CD8-positive, alpha-beta memory T cell (primary cell): ENCODE measurements at regions of chr1 and their contacts with region 1.

Region 1: DNA sequence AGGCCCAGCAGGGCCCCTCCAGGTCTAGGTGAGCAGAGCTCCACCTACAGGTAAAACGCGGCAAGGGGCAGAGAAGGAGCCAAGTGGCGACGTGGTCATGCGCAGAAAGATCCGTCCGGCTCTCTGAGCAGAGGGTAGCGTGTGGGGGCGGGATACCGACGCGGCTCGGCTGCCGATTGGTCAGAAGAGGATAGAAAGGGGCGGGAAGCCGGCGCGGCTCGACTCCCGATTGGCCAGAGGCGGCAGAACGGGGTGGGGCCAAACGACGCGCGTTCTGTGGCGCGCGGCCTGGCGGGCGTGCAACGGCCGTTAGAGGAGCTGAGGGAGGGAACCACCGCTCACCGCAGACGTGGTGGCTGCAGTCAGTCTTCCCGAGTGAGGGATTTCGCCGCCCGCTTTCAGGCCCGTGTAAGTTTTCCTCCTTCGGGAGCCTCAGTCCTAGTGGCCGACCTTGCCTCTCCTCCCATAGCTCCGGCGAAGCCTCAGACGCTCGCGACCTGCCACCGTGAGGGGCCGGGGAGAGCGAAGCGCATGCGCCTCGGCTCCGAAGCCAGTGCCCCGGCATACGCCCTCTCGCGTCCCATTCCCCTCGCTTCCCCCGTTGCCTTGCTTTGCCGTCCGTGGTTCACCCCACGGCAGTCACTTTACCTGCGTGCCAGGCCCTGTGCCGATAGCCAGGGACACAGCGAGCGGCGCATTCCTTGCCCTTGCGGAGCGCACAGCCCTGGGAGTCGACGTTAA is at the start of gene CEP85:
- DNase-seq: peak; percentile 97 to 99 (median 98)
- H3K4me3 ChIP-seq: peak within 1 kb of the TSS; percentile 96
- H3K4me3 Mint-ChIP-seq: peak within 1 kb of the TSS; percentile 95 to 99 (median 97)
- H3K27ac ChIP-seq: peak within 1 kb of the TSS; percentile 89
- H3K27ac Mint-ChIP-seq: peak within 1 kb of the TSS; percentile 91 to 98 (median 96)
- H3K4me1 ChIP-seq: peaks cover 29% of the 10 kb centered on the region
- H3K4me1 Mint-ChIP-seq: peaks cover 29 to 38% (median 35%) of the 10 kb centered on the region in 3 donors
- H3K27me3 ChIP-seq: no peaks in the 10 kb centered on the region
- H3K27me3 Mint-ChIP-seq: peaks cover 0 to 5% of the 10 kb centered on the region in 2 donors
- total RNA-seq, gene CEP85: 28.8 to 29.7 TPM

Region 2: DNA sequence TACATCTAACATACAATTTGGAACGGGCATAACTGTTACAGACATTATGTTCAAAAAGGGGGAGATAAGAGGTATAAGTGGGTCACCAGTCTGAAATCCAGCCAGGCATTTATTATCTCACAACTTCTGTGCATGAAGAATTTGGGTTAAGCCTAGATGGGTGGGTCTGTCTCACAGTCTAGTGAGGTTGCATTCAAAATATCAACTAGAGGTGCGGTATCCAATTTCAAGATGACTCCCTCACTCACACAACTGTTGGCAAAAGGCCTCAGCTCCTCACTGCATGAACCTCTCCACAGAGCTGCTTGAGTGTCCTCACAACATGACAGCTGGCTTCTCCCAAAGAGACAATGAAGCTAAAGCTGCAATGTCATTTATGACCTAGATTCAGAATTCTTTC is 379.5 kb before region 1 on chr1:
- CTCF ChIA-PET with region 1: no interaction called
- POLR2A ChIA-PET with region 1: interaction called, 15 read pairs
- DNase-seq: no peak
- H3K4me3 ChIP-seq: no peak overlapping the region
- H3K4me3 Mint-ChIP-seq: no peak overlapping the region
- H3K27ac ChIP-seq: no peak overlapping the region
- H3K27ac Mint-ChIP-seq: no peak overlapping the region
- H3K4me1 ChIP-seq: peaks cover 9% of the 10 kb centered on the region
- H3K4me1 Mint-ChIP-seq: peaks cover 8 to 14% (median 12%) of the 10 kb centered on the region in 3 donors
- H3K27me3 ChIP-seq: no peaks in the 10 kb centered on the region
- H3K27me3 Mint-ChIP-seq: no peaks in the 10 kb centered on the region

Region 3: GRCh38 chr1:26169669-26170471 is 64.2 kb before region 1 on chr1 and contains the start of gene ZNF593:
- CTCF ChIA-PET with region 1: interaction called, 87 read pairs
- POLR2A ChIA-PET with region 1: interaction called, 6 read pairs
- DNase-seq: peak; percentile 71 to 88 (median 81)
- H3K4me3 ChIP-seq: peak within 1 kb of the TSS; percentile 68
- H3K4me3 Mint-ChIP-seq: peak within 1 kb of the TSS; percentile 86 to 95 (median 88)
- H3K27ac ChIP-seq: peak within 1 kb of the TSS; percentile 86
- H3K27ac Mint-ChIP-seq: peak within 1 kb of the TSS; percentile 39 to 97 (median 85)
- H3K4me1 ChIP-seq: peaks cover 17% of the 10 kb centered on the region
- H3K4me1 Mint-ChIP-seq: peaks cover 12 to 25% (median 22%) of the 10 kb centered on the region in 3 donors
- H3K27me3 ChIP-seq: no peaks in the 10 kb centered on the region
- H3K27me3 Mint-ChIP-seq: peaks cover 0 to 2% of the 10 kb centered on the region in 2 donors
- total RNA-seq, gene ZNF593: 86.4 to 87.9 TPM

Region 4: GRCh38 chr1:26203642-26204318 is 30.3 kb before region 1 on chr1:
- CTCF ChIA-PET with region 1: interaction called, 11 read pairs
- POLR2A ChIA-PET with region 1: no interaction called
- DNase-seq: no peak
- H3K4me3 ChIP-seq: no peak overlapping the region
- H3K4me3 Mint-ChIP-seq: no peak overlapping the region
- H3K27ac ChIP-seq: no peak overlapping the region
- H3K27ac Mint-ChIP-seq: peak overlapping the region in 1 of 8 donors; percentile 2
- H3K4me1 ChIP-seq: peaks cover 30% of the 10 kb centered on the region
- H3K4me1 Mint-ChIP-seq: peaks cover 22 to 35% (median 34%) of the 10 kb centered on the region in 3 donors
- H3K27me3 ChIP-seq: peaks cover 4% of the 10 kb centered on the region
- H3K27me3 Mint-ChIP-seq: peaks cover 3% of the 10 kb centered on the region in 2 donors

Region 5: GRCh38 chr1:26300586-26301275 is 66.7 kb after region 1 on chr1:
- CTCF ChIA-PET with region 1: no interaction called
- POLR2A ChIA-PET with region 1: no interaction called
- DNase-seq: no peak
- H3K4me3 ChIP-seq: no peak overlapping the region
- H3K4me3 Mint-ChIP-seq: no peak overlapping the region
- H3K27ac ChIP-seq: no peak overlapping the region
- H3K27ac Mint-ChIP-seq: peak overlapping the region in 4 of 8 donors; percentile 3 to 86 (median 74)
- H3K4me1 ChIP-seq: peaks cover 3% of the 10 kb centered on the region
- H3K4me1 Mint-ChIP-seq: peaks cover 3 to 12% (median 6%) of the 10 kb centered on the region in 3 donors
- H3K27me3 ChIP-seq: no peaks in the 10 kb centered on the region
- H3K27me3 Mint-ChIP-seq: no peaks in the 10 kb centered on the region

Region 6: DNA sequence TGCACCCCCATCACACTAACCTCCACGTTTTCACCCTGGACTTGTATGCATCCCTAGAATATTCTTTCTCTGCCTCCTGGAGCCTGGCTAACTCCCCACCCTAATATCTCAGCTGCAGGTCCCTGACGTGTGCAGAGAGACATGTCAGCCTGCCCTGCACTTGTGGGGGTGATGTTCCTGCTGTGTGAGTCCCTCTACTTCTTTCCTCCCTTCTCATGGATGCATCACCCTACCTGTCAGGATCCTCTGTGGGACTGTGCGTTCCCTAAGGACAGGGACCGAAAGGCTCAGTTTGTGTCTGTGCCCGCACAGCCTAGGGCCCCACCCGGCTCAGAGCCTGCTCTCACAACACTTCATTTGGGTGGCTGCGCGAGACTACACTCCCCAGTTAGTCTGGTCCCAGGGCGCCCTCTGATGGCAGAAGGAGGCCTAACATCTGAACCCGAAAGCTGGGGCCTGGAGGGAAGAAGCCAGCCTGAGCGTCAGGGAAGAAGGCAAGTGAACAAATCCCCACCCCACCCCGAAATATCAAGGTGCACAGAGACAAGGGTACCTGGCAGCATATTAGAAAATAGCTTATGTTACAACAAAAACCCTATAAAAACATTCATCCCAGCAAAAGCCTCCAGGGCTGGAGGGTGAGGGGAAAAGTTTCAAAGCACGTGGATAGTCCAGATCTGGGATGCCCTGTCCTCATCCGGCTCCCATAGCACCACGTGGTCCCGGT is 87.4 kb after region 1 on chr1:
- CTCF ChIA-PET with region 1: interaction called, 36 read pairs
- POLR2A ChIA-PET with region 1: interaction called, 6 read pairs
- DNase-seq: peak; percentile 85 to 94 (median 90)
- H3K4me3 ChIP-seq: peak overlapping the region; percentile 93
- H3K4me3 Mint-ChIP-seq: peak overlapping the region; percentile 75 to 99 (median 91)
- H3K27ac ChIP-seq: no peak overlapping the region
- H3K27ac Mint-ChIP-seq: peak overlapping the region; percentile 41 to 100 (median 95)
- H3K4me1 ChIP-seq: peaks cover 46% of the 10 kb centered on the region
- H3K4me1 Mint-ChIP-seq: peaks cover 47 to 63% (median 53%) of the 10 kb centered on the region in 3 donors
- H3K27me3 ChIP-seq: no peaks in the 10 kb centered on the region
- H3K27me3 Mint-ChIP-seq: peaks cover 0 to 2% of the 10 kb centered on the region in 2 donors